ENCODE measurements at regions of chr1 and their contacts with region 1.

Region 1: GRCh38 chr1:44842862-44843655 is at the start of gene PTCH2:
- DNase-seq: peak; percentile 51
- H3K4me3 ChIP-seq: peak within 1 kb of the TSS; percentile 34 to 46
- H3K27ac ChIP-seq: peak within 1 kb of the TSS; percentile 45 to 46
- H3K4me1 ChIP-seq: no peaks in the 10 kb centered on the region
- H3K27me3 ChIP-seq: no peaks in the 10 kb centered on the region
- CTCF ChIP-seq: peak in 1 of 4 experiments; percentile 17
- POLR2A ChIP-seq: peak; percentile 42
- total RNA-seq, gene PTCH2: 0.32 to 31.9 TPM

Region 2: GRCh38 chr1:44985747-44986359 is 142.8 kb after region 1 on chr1:
- intact Hi-C with region 1: loop called (anchors 5 kb)
- DNase-seq: no peak
- H3K4me3 ChIP-seq: peak overlapping the region; percentile 65 to 68
- H3K27ac ChIP-seq: peak overlapping the region; percentile 38 to 58
- H3K4me1 ChIP-seq: peaks cover 5% of the 10 kb centered on the region
- H3K27me3 ChIP-seq: no peaks in the 10 kb centered on the region
- CTCF ChIP-seq: no peak
- POLR2A ChIP-seq: no peak

Region 3: DNA sequence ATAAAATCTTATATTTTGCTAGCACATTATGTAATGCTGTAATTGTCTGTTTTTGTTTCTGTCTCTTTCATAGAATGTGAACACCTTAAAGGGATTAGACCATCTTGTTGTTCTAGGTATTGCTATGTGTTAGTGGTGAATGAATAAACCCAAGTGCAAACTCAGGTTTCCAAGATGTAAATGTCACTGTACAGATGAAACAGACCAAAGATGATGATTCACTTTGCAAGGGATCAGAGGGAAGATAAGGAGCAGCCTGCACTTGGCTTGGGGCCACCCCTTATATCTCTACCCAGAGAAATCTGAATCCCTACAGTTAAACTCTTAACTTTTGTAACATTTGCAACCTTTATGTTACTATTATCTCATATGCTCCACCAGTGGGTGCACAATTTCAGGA is 194.4 kb after region 1 on chr1:
- intact Hi-C with region 1: no loop called
- DNase-seq: no peak
- H3K4me3 ChIP-seq: no peak overlapping the region
- H3K27ac ChIP-seq: no peak overlapping the region
- H3K4me1 ChIP-seq: no peaks in the 10 kb centered on the region
- H3K27me3 ChIP-seq: no peaks in the 10 kb centered on the region
- CTCF ChIP-seq: no peak
- POLR2A ChIP-seq: no peak